WTC11 (cell line): ENCODE measurements at regions of chrX and their contacts with region 1.

Region 1: GRCh38 chrX:8738588-8739189 is 6.8 kb upstream of the ANOS1 start:
- DNase-seq: peak; percentile 42
- ATAC-seq: peak; percentile 43; the same call in 1 of the 2 replicates
- H3K4me3 Mint-ChIP-seq: no peak overlapping the region
- H3K27ac Mint-ChIP-seq: no peak overlapping the region
- H3K4me1 Mint-ChIP-seq: peaks cover 18% of the 10 kb centered on the region
- H3K27me3 Mint-ChIP-seq: no peaks in the 10 kb centered on the region
- CTCF ChIP-seq: peak; percentile 38

Region 2: GRCh38 chrX:8364369-8365141 is 374.1 kb before region 1 on chrX:
- CTCF ChIA-PET with region 1: interaction called, 16 read pairs
- POLR2A ChIA-PET with region 1: no interaction called
- DNase-seq: peak; percentile 60
- ATAC-seq: peak; percentile 81
- H3K4me3 Mint-ChIP-seq: no peak overlapping the region
- H3K27ac Mint-ChIP-seq: no peak overlapping the region
- H3K4me1 Mint-ChIP-seq: peaks cover 5% of the 10 kb centered on the region; the same call in 1 of the 2 replicates
- H3K27me3 Mint-ChIP-seq: no peaks in the 10 kb centered on the region
- CTCF ChIP-seq: 0 out of 2 replicates have a peak, but pooled peaks have one; percentile 15

Region 3: GRCh38 chrX:8823698-8824097 is 85.0 kb after region 1 on chrX:
- CTCF ChIA-PET with region 1: no interaction called
- POLR2A ChIA-PET with region 1: no interaction called
- DNase-seq: no peak
- ATAC-seq: no peak
- H3K4me3 Mint-ChIP-seq: no peak overlapping the region
- H3K27ac Mint-ChIP-seq: no peak overlapping the region
- H3K4me1 Mint-ChIP-seq: peaks cover 8% of the 10 kb centered on the region
- H3K27me3 Mint-ChIP-seq: no peaks in the 10 kb centered on the region
- CTCF ChIP-seq: no peak